ENCODE measurements at regions of chr2 and their contacts with region 1.

Region 1: GRCh38 chr2:105744091-105744908 is 412 bp upstream of the NCK2 start:
- DNase-seq: peak; percentile 79
- ATAC-seq: peak; percentile 86
- H3K4me3 Mint-ChIP-seq: peak overlapping the region; percentile 86
- H3K27ac Mint-ChIP-seq: peak overlapping the region; percentile 86
- H3K4me1 Mint-ChIP-seq: peaks cover 76% of the 10 kb centered on the region
- H3K27me3 Mint-ChIP-seq: no peaks in the 10 kb centered on the region
- CTCF ChIP-seq: no peak

Region 2: GRCh38 chr2:105775809-105776559 is 31.7 kb after region 1 on chr2:
- CTCF ChIA-PET with region 1: no interaction called
- POLR2A ChIA-PET with region 1: interaction called, 44 read pairs
- intact Hi-C with region 1: loop called (anchors 1 kb)
- DNase-seq: peak; percentile 64
- ATAC-seq: peak; percentile 96
- H3K4me3 Mint-ChIP-seq: peak overlapping the region; percentile 57
- H3K27ac Mint-ChIP-seq: peak overlapping the region; percentile 93
- H3K4me1 Mint-ChIP-seq: peaks cover 87% of the 10 kb centered on the region
- H3K27me3 Mint-ChIP-seq: no peaks in the 10 kb centered on the region
- CTCF ChIP-seq: no peak

Region 3: DNA sequence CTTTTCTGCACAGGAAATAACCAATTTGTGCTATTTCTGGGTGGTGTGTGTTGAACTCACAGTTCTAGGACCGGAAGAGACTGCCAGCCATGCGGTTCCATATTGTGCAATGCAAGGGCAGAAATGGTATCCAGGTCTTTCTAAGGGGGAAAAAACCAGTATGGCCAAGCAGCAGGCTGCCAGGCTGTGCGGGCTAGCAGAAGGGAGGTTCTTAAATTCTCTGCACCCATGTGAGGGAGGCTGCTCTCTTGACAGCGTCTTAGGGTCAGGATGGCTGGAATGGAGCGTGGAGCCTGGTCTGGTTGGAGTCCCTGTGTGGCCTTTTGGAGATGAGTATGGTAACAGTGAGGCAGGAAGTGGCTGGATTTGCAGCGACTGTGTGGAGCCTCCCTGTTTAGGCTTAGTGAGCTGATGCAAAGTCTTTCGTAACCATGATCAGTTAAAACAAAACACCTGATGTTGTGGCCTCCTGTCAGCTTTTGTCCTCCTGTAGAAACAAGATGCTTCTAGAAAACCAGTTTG is 53.1 kb after region 1 on chr2:
- CTCF ChIA-PET with region 1: interaction called, 3 read pairs
- POLR2A ChIA-PET with region 1: interaction called, 25 read pairs
- intact Hi-C with region 1: loop called (anchors 1 kb)
- DNase-seq: no peak
- ATAC-seq: peak; percentile 29
- H3K4me3 Mint-ChIP-seq: peak overlapping the region; percentile 68
- H3K27ac Mint-ChIP-seq: peak overlapping the region; percentile 90
- H3K4me1 Mint-ChIP-seq: peaks cover 95% of the 10 kb centered on the region
- H3K27me3 Mint-ChIP-seq: no peaks in the 10 kb centered on the region
- CTCF ChIP-seq: no peak

Region 4: GRCh38 chr2:105834931-105835330 is 90.6 kb after region 1 on chr2:
- CTCF ChIA-PET with region 1: no interaction called
- POLR2A ChIA-PET with region 1: no interaction called
- intact Hi-C with region 1: loop called (anchors 2 kb)
- DNase-seq: no peak
- ATAC-seq: peak; percentile 72
- H3K4me3 Mint-ChIP-seq: peak overlapping the region; percentile 56
- H3K27ac Mint-ChIP-seq: peak overlapping the region; percentile 82
- H3K4me1 Mint-ChIP-seq: peaks cover 75% of the 10 kb centered on the region
- H3K27me3 Mint-ChIP-seq: no peaks in the 10 kb centered on the region
- CTCF ChIP-seq: no peak

Region 5: GRCh38 chr2:106098081-106098480 is 353.8 kb after region 1 on chr2:
- CTCF ChIA-PET with region 1: interaction called, 4 read pairs
- POLR2A ChIA-PET with region 1: no interaction called
- intact Hi-C with region 1: loop called (anchors 5 kb)
- DNase-seq: no peak
- ATAC-seq: no peak
- H3K4me3 Mint-ChIP-seq: no peak overlapping the region
- H3K27ac Mint-ChIP-seq: no peak overlapping the region
- H3K4me1 Mint-ChIP-seq: peaks cover 28% of the 10 kb centered on the region
- H3K27me3 Mint-ChIP-seq: no peaks in the 10 kb centered on the region
- CTCF ChIP-seq: no peak

Region 6: DNA sequence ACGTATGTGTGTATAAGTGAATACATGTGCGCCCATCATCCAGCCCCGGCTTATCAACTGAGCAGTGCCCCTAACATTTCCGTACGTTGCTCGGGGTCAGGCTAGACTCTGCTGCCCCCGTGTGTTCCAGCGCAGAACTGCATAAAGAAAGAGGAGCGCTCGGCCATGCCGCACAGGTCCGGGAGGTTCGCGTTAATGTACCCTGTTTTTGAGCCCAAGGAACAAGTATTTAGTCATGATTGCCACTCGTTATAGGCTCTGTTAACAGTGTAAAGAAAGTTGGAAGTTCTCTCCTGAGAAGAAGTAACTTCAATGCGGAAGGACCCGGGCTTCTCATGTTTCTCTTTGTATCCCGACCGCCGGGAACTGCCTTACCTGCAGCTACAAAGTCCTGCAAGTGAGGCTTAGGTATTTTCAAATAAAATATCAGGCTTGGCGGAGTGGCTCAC is 798.5 kb after region 1 on chr2:
- CTCF ChIA-PET with region 1: no interaction called
- POLR2A ChIA-PET with region 1: no interaction called
- intact Hi-C with region 1: loop called (anchors 5 kb)
- DNase-seq: peak; percentile 66
- ATAC-seq: peak; percentile 95
- H3K4me3 Mint-ChIP-seq: peak overlapping the region; percentile 58
- H3K27ac Mint-ChIP-seq: no peak overlapping the region
- H3K4me1 Mint-ChIP-seq: peaks cover 2% of the 10 kb centered on the region
- H3K27me3 Mint-ChIP-seq: peaks cover 21% of the 10 kb centered on the region
- CTCF ChIP-seq: peak; percentile 98

Measured in activated B cell treated with CpG ODN at 0.5 μM for 24 hours (primary cell).